A549 (cell line): ENCODE measurements at regions of chr10 and their contacts with region 1.

Region 1: GRCh38 chr10:29386342-29386999 is 97.6 kb downstream of the LYZL1 start:
- DNase-seq: peak; percentile 34 to 40
- ATAC-seq: peak; percentile 67 to 79
- H3K4me3 ChIP-seq: no peak overlapping the region
- H3K27ac ChIP-seq: no peak overlapping the region
- H3K4me1 ChIP-seq: no peaks in the 10 kb centered on the region
- CTCF ChIP-seq: peak; percentile 62
- EP300 ChIP-seq: no peak
- POLR2A ChIP-seq: no peak
- RAD21 ChIP-seq: peak in 1 of 2 experiments; percentile 27; a peak in 2 of 5 replicates

Region 2: GRCh38 chr10:29370097-29371092 is 16.1 kb before region 1 on chr10:
- CTCF ChIA-PET with region 1: interaction called, 23 read pairs
- POLR2A ChIA-PET with region 1: no interaction called
- DNase-seq: no peak
- ATAC-seq: no peak; a peak in 1 of 6 replicates
- H3K4me3 ChIP-seq: no peak overlapping the region
- H3K27ac ChIP-seq: no peak overlapping the region
- H3K4me1 ChIP-seq: no peaks in the 10 kb centered on the region
- CTCF ChIP-seq: no peak
- EP300 ChIP-seq: no peak
- POLR2A ChIP-seq: no peak
- RAD21 ChIP-seq: no peak